Left ventricle myocardium superior (tissue), 1 donor: ENCODE measurements at regions of chr4 and their contacts with region 1.

Region 1: GRCh38 chr4:85218756-85219155 is 252.3 kb upstream of the WDFY3 start:
- DNase-seq: no peak
- ATAC-seq: no peak

Region 2: GRCh38 chr4:85094735-85095134 is 124.0 kb before region 1 on chr4:
- intact Hi-C with region 1: loop called (anchors 5 kb)
- DNase-seq: no peak
- ATAC-seq: no peak